Panc1 (cell line): ENCODE measurements at regions of chr10 and their contacts with region 1.

Region 1: GRCh38 chr10:102140184-102140583 is 7.3 kb downstream of the PPRC1 start:
- DNase-seq: no peak
- ATAC-seq: no peak
- H3K4me3 ChIP-seq: no peak overlapping the region
- H3K27ac ChIP-seq: no peak overlapping the region
- H3K4me1 ChIP-seq: peaks cover 16% of the 10 kb centered on the region
- H3K27me3 ChIP-seq: no peaks in the 10 kb centered on the region
- CTCF ChIP-seq: no peak

Region 2: GRCh38 chr10:101797403-101798059 is 342.7 kb before region 1 on chr10:
- CTCF ChIA-PET with region 1: no interaction called
- POLR2A ChIA-PET with region 1: interaction called, 17 read pairs
- in situ Hi-C with region 1: no loop called
- intact Hi-C with region 1: no loop called
- DNase-seq: no peak
- ATAC-seq: no peak
- H3K4me3 ChIP-seq: no peak overlapping the region
- H3K27ac ChIP-seq: no peak overlapping the region
- H3K4me1 ChIP-seq: no peaks in the 10 kb centered on the region
- H3K27me3 ChIP-seq: no peaks in the 10 kb centered on the region
- CTCF ChIP-seq: no peak

Region 3: DNA sequence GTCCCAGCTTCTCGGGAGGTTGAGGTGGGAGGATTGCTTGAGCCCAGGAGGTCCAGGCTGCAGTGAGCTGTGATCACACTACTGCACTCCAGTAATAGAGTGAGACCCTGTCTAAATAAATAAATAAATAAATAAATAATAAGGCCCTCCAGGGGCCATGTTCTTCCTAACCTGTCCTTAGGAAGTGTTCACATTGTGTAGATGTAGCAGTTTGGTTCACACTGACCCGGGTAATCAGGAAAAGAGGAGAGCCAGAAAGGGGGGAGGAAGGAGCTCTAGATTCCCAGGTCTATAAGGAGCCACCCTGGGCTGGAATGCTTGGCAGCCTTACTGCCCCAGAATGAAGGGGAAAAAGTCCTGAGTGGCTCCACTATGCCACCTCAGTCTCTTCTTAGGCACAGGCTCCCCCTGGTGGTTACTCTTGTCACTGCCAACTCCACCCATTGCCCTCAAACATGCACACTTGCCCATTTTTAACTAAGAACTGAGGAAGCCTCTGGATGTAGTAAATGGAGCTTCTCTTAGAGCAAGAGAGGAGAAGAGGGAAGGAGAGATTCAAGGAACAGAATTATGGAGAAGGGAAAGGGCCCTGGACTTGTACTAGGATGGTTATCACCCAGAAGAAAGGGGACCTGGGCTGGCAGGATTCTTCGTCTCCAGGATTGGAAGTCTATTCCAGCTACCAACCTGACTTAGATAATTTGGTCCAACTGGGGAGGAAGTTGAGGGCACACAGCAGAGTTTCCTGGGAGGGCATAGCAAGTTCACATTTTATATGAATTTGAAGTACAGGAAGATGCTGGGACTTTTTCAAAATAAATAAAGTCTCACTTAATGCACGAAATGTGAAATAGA is 67.3 kb before region 1 on chr10:
- CTCF ChIA-PET with region 1: no interaction called
- POLR2A ChIA-PET with region 1: interaction called, 11 read pairs
- in situ Hi-C with region 1: no loop called
- intact Hi-C with region 1: no loop called
- DNase-seq: peak; percentile 76
- ATAC-seq: peak; percentile 93
- H3K4me3 ChIP-seq: no peak overlapping the region
- H3K27ac ChIP-seq: no peak overlapping the region
- H3K4me1 ChIP-seq: no peaks in the 10 kb centered on the region
- H3K27me3 ChIP-seq: no peaks in the 10 kb centered on the region
- CTCF ChIP-seq: peak; percentile 98

Region 4: DNA sequence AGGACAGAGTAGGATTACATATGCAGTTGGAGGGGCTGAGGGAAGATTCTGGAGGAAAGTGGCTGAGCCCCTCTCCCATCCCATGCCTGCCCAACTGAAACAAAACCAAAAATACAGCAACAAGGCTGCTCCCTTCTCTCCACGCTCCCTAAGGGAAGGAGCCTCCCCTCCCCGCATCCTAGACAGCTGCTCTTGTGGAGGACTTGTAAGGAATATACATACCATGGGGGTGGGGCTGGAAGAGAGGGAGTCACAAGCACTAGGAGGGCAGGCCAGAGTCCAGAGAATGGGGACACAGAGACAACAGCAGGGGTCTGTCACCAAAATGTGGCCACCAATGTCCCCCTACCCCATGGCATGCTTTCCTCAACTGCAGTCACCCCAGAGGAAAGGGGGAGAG is 33.2 kb before region 1 on chr10:
- CTCF ChIA-PET with region 1: no interaction called
- POLR2A ChIA-PET with region 1: interaction called, 10 read pairs
- in situ Hi-C with region 1: no loop called
- intact Hi-C with region 1: no loop called
- DNase-seq: no peak
- ATAC-seq: no peak; the same call in 1 of the 2 replicates
- H3K4me3 ChIP-seq: no peak overlapping the region
- H3K27ac ChIP-seq: no peak overlapping the region
- H3K4me1 ChIP-seq: no peaks in the 10 kb centered on the region
- H3K27me3 ChIP-seq: no peaks in the 10 kb centered on the region
- CTCF ChIP-seq: no peak